ENCODE measurements at regions of chr2 and their contacts with region 1.

Region 1: DNA sequence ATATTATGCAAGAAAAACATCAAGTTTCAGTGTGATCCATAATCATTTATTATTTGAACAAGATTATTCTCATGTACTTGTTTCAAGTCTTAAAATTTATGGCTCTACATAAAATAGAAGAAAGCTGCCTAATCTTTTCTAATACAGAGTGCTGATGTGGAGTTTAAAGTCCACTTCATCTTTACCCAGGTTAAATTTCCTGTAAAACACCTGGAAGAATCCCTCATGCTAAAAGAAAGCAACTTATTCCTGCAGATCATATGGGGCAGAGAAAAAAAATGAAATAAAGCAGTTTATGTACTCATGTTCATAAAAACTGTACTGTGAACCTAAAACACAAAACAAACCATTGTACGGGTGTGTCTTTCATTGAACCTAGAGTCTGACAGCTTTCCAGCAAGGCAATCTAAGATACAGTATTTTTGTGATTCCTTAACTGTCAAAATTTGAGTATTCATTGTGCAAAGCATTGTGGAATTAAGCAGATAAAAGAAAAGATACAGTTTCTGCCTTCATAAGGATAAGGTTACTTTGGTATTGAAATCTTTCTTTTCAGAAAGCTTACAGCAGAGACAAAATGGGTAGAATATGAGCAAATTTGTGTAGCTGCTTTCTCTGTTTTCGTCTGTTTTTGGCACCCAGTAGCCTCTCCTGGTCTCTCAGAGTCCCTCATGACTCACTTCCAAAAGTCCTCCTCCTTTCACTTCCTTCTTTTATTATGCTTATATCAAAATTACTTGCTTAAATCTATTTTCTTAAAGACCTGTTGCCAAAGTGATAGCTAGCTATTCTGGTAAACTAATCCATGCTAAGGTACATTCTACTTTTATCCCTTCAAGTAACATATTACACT is 26.9 kb upstream of the GLS start:
- DNase-seq: no peak
- H3K4me3 Mint-ChIP-seq: no peak overlapping the region
- H3K27ac Mint-ChIP-seq: no peak overlapping the region
- H3K4me1 Mint-ChIP-seq: peaks cover 1% of the 10 kb centered on the region
- H3K27me3 Mint-ChIP-seq: no peaks in the 10 kb centered on the region

Region 2: GRCh38 chr2:190718652-190719526 is 134.9 kb before region 1 on chr2:
- CTCF ChIA-PET with region 1: no interaction called
- POLR2A ChIA-PET with region 1: no interaction called
- DNase-seq: peak; percentile 42
- H3K4me3 Mint-ChIP-seq: no peak overlapping the region
- H3K27ac Mint-ChIP-seq: no peak overlapping the region
- H3K4me1 Mint-ChIP-seq: peaks cover 51% of the 10 kb centered on the region
- H3K27me3 Mint-ChIP-seq: no peaks in the 10 kb centered on the region

Region 3: DNA sequence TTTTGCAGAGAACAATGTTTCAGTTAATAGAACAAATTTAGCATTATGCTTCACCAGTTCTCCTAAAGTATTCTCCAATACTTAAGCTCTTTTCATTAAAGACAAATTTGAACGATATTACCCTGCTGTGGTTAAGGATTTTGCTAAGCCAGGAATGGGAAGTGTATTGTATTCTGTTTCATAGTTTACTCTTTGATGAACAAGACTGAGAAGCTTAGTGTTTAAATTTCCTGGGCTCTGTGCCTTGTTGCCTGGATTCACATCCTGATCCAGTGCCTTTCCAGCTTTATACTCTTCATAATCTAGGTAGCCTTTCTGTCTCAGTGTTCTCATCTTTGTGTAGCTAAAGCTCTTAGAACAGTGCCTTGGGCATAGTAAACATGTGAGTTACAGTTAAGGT is 31.7 kb before region 1 on chr2:
- CTCF ChIA-PET with region 1: interaction called, 10 read pairs
- POLR2A ChIA-PET with region 1: no interaction called
- DNase-seq: no peak
- H3K4me3 Mint-ChIP-seq: no peak overlapping the region
- H3K27ac Mint-ChIP-seq: no peak overlapping the region
- H3K4me1 Mint-ChIP-seq: no peaks in the 10 kb centered on the region
- H3K27me3 Mint-ChIP-seq: peaks cover 2% of the 10 kb centered on the region

Region 4: DNA sequence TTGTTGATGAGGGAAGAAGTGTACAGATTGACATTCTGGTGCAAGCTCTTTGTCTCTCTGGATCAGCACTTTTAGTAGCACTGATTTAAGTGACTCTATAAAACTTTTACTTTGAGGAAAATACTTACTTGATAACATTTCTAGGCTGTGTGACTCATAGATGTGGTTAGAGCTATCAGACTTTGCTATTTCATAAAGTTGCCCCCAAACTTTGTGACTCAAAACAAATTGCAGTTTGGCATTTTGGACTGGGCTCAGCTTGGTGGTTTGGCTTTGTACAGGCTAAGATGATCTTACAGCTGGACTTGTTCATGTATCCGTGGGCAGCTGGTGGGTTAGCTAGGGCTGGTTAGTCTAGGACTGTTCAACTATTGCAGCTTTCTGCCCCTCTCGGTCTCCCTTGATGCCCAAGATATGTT is 15.3 kb before region 1 on chr2:
- CTCF ChIA-PET with region 1: interaction called, 11 read pairs
- POLR2A ChIA-PET with region 1: no interaction called
- DNase-seq: no peak
- H3K4me3 Mint-ChIP-seq: no peak overlapping the region
- H3K27ac Mint-ChIP-seq: no peak overlapping the region
- H3K4me1 Mint-ChIP-seq: peaks cover 5% of the 10 kb centered on the region
- H3K27me3 Mint-ChIP-seq: peaks cover 3% of the 10 kb centered on the region

Region 5: GRCh38 chr2:190887089-190887488 is 33.3 kb after region 1 on chr2:
- CTCF ChIA-PET with region 1: interaction called, 19 read pairs
- POLR2A ChIA-PET with region 1: interaction called, 18 read pairs
- DNase-seq: no peak
- H3K4me3 Mint-ChIP-seq: no peak overlapping the region
- H3K27ac Mint-ChIP-seq: no peak overlapping the region
- H3K4me1 Mint-ChIP-seq: peaks cover 64% of the 10 kb centered on the region
- H3K27me3 Mint-ChIP-seq: no peaks in the 10 kb centered on the region

Region 6: GRCh38 chr2:190920085-190920484 is 66.3 kb after region 1 on chr2:
- CTCF ChIA-PET with region 1: interaction called, 10 read pairs
- POLR2A ChIA-PET with region 1: no interaction called
- DNase-seq: no peak
- H3K4me3 Mint-ChIP-seq: no peak overlapping the region
- H3K27ac Mint-ChIP-seq: no peak overlapping the region
- H3K4me1 Mint-ChIP-seq: peaks cover 24% of the 10 kb centered on the region
- H3K27me3 Mint-ChIP-seq: no peaks in the 10 kb centered on the region

Region 7: GRCh38 chr2:190947711-190948251 is 94.0 kb after region 1 on chr2:
- CTCF ChIA-PET with region 1: interaction called, 18 read pairs
- POLR2A ChIA-PET with region 1: interaction called, 3 read pairs
- DNase-seq: no peak
- H3K4me3 Mint-ChIP-seq: no peak overlapping the region
- H3K27ac Mint-ChIP-seq: no peak overlapping the region
- H3K4me1 Mint-ChIP-seq: peaks cover 12% of the 10 kb centered on the region
- H3K27me3 Mint-ChIP-seq: no peaks in the 10 kb centered on the region